K562 (cell line): ENCODE measurements at regions of chr16 and their contacts with region 1.

Region 1: DNA sequence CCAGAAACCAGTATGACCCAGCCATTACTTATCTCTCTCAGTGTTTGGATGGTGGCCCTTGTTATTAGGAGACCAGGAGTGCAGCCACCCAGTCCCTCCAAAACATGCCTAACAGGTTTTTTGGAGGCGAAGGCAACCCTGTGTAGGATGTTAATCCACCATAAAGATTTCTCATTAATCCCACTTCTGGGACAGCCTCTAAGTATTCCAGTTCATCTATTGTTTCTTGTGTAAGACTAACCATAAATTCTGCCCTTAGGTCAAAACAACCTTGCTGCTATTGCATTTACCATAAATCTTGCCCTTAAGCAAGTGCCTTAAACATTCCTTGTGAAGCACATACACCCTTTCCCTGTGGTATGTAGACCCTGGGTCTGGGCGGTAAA is 21.5 kb upstream of the OR1F1 start:
- DNase-seq: no peak
- ATAC-seq: no peak
- H3K4me3 ChIP-seq: no peak overlapping the region
- H3K27ac ChIP-seq: no peak overlapping the region
- H3K4me1 ChIP-seq: peaks cover 18 to 41% of the 10 kb centered on the region in 2 experiments; a peak in 4 of 5 replicates
- H3K27me3 ChIP-seq: peaks cover 0 to 4% of the 10 kb centered on the region in 2 experiments; a peak in 1 of 5 replicates
- CTCF ChIP-seq: no peak
- EP300 ChIP-seq: no peak
- POLR2A ChIP-seq: no peak
- RAD21 ChIP-seq: no peak

Region 2: DNA sequence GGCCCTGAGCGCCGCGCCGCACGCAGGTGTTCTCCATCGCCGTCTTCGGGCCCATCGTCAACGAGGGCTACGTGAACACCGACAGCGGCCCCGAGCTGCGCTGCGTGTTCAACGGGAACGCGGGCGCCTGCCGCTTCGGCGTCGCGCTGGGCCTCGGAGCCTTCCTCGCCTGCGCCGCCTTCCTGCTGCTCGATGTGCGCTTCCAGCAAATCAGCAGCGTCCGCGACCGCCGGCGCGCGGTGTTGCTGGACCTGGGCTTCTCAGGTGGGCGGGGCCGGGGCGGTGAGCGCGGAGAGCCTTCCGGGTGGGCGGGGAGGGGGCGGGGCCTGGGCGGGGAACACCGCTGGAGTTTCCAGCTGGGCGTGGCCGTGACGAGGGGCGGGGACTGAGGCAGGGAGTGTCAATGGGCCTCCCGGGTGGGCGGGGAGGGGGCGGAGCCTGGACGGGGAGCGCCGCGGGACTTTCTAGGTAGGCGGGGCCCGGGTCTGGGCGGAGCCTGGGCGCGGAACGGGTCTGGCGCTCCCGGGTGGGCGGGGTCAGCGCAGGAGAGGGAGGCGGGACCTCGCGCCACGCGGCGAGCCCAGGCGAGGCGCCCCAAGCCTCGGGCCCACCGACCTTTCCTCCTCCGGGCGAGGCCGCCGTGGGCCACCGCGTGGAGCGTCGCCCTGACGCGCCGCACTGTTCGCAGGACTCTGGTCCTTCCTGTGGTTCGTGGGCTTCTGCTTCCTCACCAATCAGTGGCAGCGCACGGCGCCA is 1174.4 kb before region 1 on chr16:
- CTCF ChIA-PET with region 1: no interaction called
- POLR2A ChIA-PET with region 1: no interaction called
- in situ Hi-C with region 1: no loop called
- intact Hi-C with region 1: no loop called
- DNase-seq: peak; percentile 97 to 99 (median 97)
- ATAC-seq: peak; percentile 82
- H3K4me3 ChIP-seq: peak overlapping the region; percentile 64
- H3K27ac ChIP-seq: peak overlapping the region; percentile 94
- H3K4me1 ChIP-seq: peaks cover 29 to 56% of the 10 kb centered on the region in 2 experiments
- H3K27me3 ChIP-seq: no peaks in the 10 kb centered on the region
- CTCF ChIP-seq: no peak
- EP300 ChIP-seq: no peak
- POLR2A ChIP-seq: peak; percentile 73
- RAD21 ChIP-seq: no peak

Region 3: DNA sequence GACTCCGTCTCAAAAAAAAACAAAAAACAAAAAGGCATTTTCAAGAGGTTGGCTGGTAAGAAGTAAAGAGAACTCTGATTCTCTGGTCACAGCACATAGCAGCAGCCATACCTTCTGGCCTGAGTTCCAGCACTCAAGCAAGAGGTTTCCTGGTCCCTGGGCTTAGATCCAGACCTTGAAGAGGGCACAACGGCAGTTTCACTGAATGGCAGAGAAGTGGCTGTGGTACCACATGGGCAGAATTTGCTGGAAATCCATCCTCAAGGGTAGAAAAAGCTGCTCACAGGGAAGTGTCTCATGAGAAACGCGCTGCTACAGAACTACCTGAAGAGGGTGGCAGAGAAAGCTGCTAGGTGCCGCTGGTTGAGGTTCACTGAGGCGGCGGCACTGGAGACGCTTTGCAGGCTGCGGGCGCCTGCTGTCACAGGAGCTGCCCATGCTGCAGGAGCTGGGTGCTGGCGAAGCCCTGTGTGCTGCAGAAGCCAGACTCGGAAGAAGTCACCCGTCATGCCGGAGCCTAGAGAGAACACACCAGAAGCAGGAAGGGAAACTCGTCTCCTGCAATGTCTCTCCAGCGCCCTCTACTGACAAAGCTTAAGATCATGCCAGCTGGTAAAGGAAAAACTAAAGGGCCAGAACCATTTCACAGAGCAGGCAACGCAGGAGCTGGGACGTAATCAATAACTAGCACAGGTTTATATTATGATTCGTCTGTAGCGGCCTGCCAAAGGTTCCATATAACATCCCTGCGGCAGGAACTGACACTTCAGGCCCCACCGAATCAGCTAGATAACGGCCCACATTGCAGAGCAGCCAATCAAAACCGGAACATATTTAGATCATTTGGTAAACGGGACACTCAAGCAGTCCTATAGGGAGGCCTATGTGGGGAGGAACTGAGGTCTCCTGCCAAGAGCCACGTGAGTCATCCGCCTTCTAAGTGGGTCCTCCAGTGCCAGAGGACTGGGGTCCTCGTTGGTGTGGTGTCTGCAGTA is 37.1 kb before region 1 on chr16:
- CTCF ChIA-PET with region 1: interaction called, 4 read pairs
- POLR2A ChIA-PET with region 1: interaction called, 5 read pairs
- in situ Hi-C with region 1: no loop called
- intact Hi-C with region 1: loop called (anchors 1 kb)
- DNase-seq: peak in 3 of 4 experiments; percentile 37 to 91 (median 49)
- ATAC-seq: peak; percentile 77
- H3K4me3 ChIP-seq: peak overlapping the region; percentile 40
- H3K27ac ChIP-seq: peak overlapping the region; percentile 40
- H3K4me1 ChIP-seq: peaks cover 15 to 24% of the 10 kb centered on the region in 2 experiments; a peak in 4 of 5 replicates
- H3K27me3 ChIP-seq: no peaks in the 10 kb centered on the region
- CTCF ChIP-seq: peak; percentile 93 to 95 (median 93)
- EP300 ChIP-seq: no peak
- POLR2A ChIP-seq: peak; percentile 62; the same call in 1 of the 2 replicates
- RAD21 ChIP-seq: peak; percentile 72 to 79

Region 4: DNA sequence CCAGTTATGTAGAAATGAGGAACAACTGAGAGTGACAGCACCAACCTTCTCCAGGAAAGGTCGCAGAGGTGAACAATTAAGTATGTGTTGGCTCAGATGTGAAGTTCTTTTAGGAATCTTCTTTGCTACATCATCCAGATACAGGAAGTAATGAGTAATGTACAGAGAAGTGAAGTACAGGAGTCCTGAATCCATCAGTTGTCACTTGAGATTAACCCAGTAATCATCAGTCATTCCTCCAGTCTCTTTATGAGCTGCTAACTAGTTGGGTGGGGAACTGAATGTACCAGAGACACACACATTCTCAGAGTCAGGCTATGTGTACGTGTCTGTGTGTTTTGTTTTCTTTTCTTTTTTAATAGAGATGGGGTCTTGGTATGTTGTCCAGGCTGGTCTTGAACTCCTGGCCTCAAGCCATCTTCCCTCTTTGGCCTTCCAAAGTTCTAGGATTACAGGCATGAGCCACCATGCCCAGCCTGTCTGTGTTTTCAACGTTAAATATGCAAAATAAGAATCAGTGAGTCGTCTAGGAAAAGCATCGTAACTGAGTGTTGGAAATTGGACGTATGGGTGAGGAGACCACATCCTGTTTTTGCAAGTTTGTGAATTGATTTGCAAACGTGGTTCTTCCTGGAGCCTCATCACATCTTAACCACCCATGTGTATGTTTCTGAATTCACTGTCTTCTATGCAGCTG is 48.5 kb after region 1 on chr16:
- CTCF ChIA-PET with region 1: no interaction called
- POLR2A ChIA-PET with region 1: no interaction called
- in situ Hi-C with region 1: no loop called
- intact Hi-C with region 1: no loop called
- DNase-seq: no peak
- ATAC-seq: no peak
- H3K4me3 ChIP-seq: no peak overlapping the region
- H3K27ac ChIP-seq: no peak overlapping the region
- H3K4me1 ChIP-seq: no peaks in the 10 kb centered on the region; a peak in 1 of 5 replicates
- H3K27me3 ChIP-seq: peaks cover 14 to 33% of the 10 kb centered on the region in 2 experiments
- CTCF ChIP-seq: no peak
- EP300 ChIP-seq: no peak
- POLR2A ChIP-seq: no peak
- RAD21 ChIP-seq: no peak